ENCODE measurements at regions of chr1 and their contacts with region 1.

Region 1: DNA sequence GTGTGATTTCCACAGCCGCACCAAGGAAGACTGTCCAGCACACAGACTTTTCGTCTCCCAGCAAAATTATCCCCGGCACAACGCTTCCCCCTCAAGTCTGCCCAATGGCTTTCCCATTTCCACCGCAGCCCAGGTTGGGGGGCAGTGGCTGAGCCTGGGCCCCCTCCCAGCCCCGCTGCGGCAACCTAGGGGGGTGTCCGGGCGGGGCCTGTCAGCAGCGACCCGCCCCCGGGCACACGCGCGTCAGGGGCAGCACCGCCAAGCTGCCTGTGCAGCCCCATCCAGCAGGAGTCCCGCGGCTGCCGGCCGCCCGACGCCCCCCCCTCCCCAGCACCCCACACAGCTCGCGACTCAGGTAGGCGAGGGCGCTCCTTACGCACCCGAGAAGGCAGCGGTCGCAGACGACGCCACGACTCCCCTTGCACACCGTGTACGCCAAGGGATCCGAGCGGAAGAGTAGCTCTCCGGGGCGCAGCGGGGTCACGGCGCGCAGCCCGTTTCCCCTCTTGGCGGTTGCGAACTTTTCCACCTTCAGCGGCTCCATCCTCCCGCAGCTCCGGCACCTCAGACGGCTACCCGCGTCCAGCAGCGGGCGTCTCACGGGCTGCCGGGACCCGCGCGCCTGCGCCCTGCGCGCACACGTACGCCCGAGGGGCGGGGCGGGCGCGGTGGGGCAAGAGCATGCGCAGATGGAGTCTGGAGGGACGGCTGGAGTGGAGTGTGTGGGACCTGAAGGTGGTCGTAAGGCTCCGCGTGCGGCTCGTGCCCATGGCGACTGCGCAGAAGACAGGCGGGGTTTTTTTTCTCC is at the start of gene SMYD3:
- DNase-seq: peak; percentile 25 to 89
- H3K4me3 ChIP-seq: peak within 1 kb of the TSS; percentile 80
- CTCF ChIP-seq: no peak
- POLR2A ChIP-seq: no peak
- total RNA-seq, gene SMYD3: 8.4 to 25.7 (median 14.4) TPM

Region 2: GRCh38 chr1:246699095-246699735 is 192.3 kb after region 1 on chr1:
- intact Hi-C with region 1: loop called (anchors 10 kb)
- DNase-seq: peak; percentile 87 to 96
- H3K4me3 ChIP-seq: no peak overlapping the region
- CTCF ChIP-seq: peak in 1 of 3 donors; percentile 66
- POLR2A ChIP-seq: no peak

Region 3: GRCh38 chr1:246753670-246754535 is 247.0 kb after region 1 on chr1:
- intact Hi-C with region 1: loop called (anchors 10 kb)
- DNase-seq: peak; percentile 29 to 87
- H3K4me3 ChIP-seq: no peak overlapping the region
- CTCF ChIP-seq: no peak
- POLR2A ChIP-seq: no peak